ENCODE measurements at regions of chr17 and their contacts with region 1.

Region 1: DNA sequence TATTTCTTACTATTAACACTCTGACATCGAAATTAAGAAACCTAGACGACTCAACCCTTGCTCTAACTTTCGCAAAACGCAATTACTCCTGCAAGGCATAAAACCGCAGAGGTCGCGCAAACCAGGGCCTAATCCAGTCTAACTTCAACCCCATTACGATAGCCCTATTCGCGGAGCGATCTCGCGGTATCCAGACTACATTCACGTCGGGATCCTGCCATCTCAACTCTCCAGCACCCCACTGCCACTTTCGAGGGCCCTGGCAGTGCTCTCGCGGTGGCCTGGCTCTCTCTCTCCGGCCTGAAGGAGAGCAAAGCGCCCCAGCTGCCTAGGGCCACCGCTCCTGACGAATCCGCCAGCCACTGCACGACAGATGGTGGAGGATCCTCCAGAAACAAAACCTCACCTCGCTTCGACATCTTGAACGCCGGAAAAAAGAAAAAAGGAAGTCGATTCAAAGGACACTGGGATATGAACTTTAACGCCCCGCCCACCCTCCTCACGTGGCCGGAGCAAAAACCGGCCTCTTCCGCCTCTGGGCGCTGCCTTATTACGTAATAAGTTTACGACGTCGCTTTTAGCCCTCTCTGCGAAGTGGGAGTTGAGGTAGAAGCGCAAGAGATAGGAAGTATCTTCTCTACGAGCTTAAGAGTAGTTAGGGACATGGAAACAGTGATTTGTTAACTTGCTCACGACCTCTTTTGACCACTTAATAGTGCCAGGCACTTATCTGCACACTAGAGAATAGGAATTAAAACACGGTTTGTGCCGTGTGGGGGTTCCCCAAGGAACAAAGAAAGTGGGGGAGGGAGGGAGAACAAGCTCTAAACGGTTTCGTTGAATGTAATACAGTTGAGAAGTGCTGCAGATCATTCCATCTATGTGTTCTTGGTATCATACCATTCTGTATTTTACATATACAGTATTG is at the start of gene RPL23:
- DNase-seq: peak; percentile 82 to 98 (median 94)

Region 2: GRCh38 chr17:38824899-38825761 is 28.4 kb before region 1 on chr17 and contains the start of gene CWC25:
- intact Hi-C with region 1: loop called (anchors 2 kb)
- DNase-seq: peak; percentile 80 to 98 (median 94)

Region 3: DNA sequence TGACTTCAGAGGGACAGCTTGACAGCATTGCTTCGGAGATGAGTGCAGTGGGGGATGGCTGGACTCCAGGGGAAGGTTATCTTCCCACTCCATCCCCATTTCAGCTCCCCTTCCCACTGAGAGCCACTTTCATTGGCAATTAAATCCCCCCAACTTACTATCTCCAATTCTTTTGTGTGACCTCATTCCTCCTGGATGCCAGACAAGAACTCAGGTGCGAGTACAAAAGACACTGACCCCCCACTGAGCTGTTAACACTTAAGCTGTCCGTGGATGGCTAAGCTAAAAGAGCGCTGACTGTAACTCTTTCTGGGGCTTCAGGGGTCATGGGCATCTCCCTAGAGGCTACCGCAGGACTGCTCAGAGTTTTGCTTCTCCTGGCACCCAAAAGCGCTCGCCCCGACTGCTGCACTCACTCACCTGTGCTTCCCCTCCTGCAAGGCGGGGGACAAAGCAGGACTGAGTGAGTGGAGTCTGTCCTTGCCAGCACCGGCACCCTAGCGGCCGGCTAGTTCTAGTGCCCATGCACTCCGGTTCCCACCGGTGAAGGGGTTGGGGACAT is 158.4 kb after region 1 on chr17:
- intact Hi-C with region 1: no loop called
- DNase-seq: no peak